ENCODE measurements at regions of chr6 and their contacts with region 1.

Region 1: DNA sequence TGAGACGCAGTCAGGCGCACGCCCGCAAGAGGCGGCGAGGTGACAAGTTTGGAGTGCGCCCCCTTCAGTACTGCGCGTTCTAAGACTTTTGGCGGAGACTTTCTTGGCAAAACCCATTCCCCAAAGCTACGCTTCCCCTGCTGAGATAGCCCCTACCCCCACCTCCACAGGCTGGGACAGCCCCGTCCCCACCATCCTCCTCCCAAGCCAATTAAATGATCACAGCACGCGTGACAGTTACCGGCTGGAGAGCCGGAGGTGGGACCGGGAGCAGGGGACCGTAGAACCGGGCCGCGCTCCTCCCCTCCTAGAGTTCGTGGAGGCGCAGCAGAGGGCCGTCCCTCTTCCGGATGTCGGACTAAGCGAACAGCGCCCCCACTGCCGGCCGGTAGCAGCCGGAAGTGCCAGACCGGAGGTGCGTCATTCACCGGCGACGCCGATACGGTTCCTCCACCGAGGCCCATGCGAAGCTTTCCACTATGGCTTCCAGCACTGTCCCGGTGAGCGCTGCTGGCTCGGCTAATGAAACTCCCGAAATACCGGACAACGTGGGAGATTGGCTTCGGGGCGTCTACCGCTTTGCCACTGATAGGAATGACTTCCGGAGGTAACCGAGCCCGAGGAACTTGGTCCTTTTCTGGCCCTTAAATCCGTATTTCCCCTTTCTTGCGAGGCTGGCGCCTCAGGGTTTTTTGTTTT is at the start of gene TOMM6:
- DNase-seq: peak; percentile 96
- ATAC-seq: peak; percentile 77
- H3K4me3 ChIP-seq: peak within 1 kb of the TSS; percentile 89
- H3K27ac ChIP-seq: peak within 1 kb of the TSS; percentile 69
- H3K4me1 ChIP-seq: peaks cover 17% of the 10 kb centered on the region
- H3K27me3 ChIP-seq: no peaks in the 10 kb centered on the region
- CTCF ChIP-seq: peak; percentile 75
- total RNA-seq, gene TOMM6: 142 and 162 TPM in 2 replicates

Region 2: DNA sequence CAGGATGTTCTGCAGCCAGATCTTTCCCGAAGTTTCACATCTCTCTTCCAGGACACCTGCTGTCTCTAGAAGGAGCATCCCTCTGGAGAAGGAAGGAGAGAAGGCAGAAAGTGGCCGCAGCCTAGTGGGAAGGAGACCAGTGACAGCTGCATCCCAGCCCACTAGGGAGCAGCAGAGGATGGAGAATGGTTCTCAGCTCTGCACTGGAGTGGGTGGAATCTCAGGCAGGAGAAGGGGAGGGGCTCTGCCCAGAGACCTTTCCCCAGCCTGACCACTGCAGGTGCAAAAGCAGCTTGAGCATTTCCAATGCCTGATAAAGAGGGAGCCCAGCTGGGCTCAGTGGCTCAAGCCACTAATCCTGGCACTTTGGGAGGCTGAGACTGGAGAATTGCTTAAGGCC is 419.7 kb before region 1 on chr6:
- CTCF ChIA-PET with region 1: no interaction called
- POLR2A ChIA-PET with region 1: no interaction called
- intact Hi-C with region 1: loop called (anchors 5 kb)
- DNase-seq: peak; percentile 77
- ATAC-seq: peak; percentile 93
- H3K4me3 ChIP-seq: no peak overlapping the region
- H3K27ac ChIP-seq: no peak overlapping the region
- H3K4me1 ChIP-seq: peaks cover 5% of the 10 kb centered on the region; the same call in 1 of the 2 replicates
- H3K27me3 ChIP-seq: peaks cover 53% of the 10 kb centered on the region
- CTCF ChIP-seq: peak; percentile 87

Region 3: DNA sequence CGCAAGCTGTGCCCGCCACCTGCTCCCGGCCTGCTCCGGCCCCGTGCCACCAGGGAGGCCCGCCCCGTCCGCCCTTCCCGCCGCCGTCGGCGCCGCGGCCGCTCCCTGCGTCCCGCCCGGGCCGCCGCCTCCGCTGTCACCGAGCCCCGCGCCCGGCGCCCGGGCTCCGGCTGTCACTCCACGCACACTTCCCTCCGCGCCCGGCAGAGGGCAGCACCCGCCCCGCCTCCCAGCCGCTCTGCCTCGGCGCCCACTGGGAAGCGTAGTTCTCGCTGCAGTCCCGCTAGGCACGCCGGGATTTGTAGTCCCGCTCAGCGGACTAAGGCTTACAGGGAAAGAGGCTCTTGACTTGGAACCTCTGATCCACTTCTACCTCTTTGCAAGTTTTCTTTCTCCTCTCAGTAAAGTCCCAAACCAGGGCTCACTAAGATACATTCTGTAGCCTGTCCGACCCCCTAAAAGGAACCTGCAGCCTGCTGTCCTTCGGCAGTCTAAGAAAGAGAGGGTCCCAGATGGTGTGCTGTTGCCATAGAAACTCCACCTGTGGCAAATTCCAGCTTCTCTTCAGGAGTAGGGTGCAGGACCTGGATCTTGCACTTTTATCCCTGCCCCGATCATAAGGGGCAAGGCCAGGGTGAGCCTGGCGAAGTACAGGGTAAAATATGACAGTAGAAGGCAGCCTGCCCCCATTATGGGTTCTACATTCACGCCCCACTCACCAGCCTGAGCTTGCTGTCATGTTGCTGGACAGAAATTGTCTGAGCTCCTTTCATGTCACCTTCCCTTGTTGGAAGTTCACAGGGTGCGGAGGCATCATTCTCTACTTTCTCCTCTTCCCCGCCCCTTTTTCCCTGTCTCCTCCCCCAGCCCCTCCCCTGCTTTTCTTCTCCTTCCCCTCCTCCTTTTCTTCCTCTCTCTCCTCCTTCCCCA is 51.7 kb before region 1 on chr6 and contains the start of gene TFEB:
- CTCF ChIA-PET with region 1: interaction called, 4 read pairs
- POLR2A ChIA-PET with region 1: no interaction called
- intact Hi-C with region 1: loop called (anchors 2 kb)
- DNase-seq: peak; percentile 92
- ATAC-seq: peak; percentile 69
- H3K4me3 ChIP-seq: peak within 1 kb of the TSS; percentile 71
- H3K27ac ChIP-seq: no peak within 1 kb of the TSS
- H3K4me1 ChIP-seq: peaks cover 12% of the 10 kb centered on the region; the same call in 1 of the 2 replicates
- H3K27me3 ChIP-seq: no peaks in the 10 kb centered on the region
- CTCF ChIP-seq: peak; percentile 71
- total RNA-seq, gene TFEB: 4.2 and 5.5 TPM in 2 replicates

Region 4: DNA sequence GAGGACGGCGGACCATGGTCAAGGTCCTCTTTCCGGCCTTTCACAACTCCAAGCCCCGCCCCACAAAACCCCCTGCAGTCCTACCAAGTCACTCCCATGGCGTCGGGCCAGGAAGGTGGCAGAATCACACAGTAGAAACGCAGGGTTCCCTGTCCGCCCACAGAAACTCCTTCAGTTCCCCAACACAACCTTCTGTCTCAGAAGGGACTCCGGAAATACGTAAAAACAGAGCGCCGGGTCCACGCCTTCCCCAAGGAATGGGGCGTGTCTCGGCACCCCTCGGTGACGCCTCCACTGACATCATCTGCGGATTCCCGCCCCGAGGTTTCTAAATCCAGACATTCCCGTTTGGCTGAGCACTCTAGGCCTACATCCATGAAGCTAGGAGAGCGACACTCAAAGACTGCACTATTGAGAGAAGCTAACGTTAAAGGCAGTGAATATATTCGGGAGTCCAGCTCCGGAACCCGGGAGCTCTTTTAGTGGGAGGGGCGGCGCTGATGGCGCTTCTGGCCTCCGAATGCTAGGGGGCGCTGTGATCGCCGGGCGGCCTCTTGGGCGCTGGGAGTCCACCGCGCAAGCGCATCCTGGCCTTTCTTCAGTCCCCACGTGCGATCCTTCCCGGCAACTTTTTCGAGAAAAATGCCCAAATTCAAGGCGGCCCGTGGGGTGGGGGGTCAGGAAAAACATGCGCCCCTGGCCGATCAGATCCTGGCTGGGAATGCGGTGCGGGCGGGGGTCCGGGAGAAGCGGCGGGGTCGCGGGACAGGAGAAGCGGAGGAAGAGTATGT is 133.7 kb after region 1 on chr6 and contains the starts of genes BYSL and MED20:
- CTCF ChIA-PET with region 1: interaction called, 6 read pairs
- POLR2A ChIA-PET with region 1: interaction called, 10 read pairs
- intact Hi-C with region 1: loop called (anchors 1 kb)
- DNase-seq: peak; percentile 94
- ATAC-seq: peak; percentile 80
- H3K4me3 ChIP-seq: peak within 1 kb of the TSS; percentile 99
- H3K27ac ChIP-seq: peak within 1 kb of the TSS; percentile 89
- H3K4me1 ChIP-seq: peaks cover 37% of the 10 kb centered on the region
- H3K27me3 ChIP-seq: no peaks in the 10 kb centered on the region
- CTCF ChIP-seq: peak; percentile 96
- total RNA-seq, gene BYSL: 46.5 and 84.1 TPM in 2 replicates
- total RNA-seq, gene MED20: 27.5 and 28.5 TPM in 2 replicates

Region 5: GRCh38 chr6:41936073-41936837 is 148.9 kb after region 1 on chr6:
- CTCF ChIA-PET with region 1: interaction called, 7 read pairs
- POLR2A ChIA-PET with region 1: no interaction called
- intact Hi-C with region 1: loop called (anchors 5 kb)
- DNase-seq: peak; percentile 91
- ATAC-seq: peak; percentile 74
- H3K4me3 ChIP-seq: no peak overlapping the region
- H3K27ac ChIP-seq: no peak overlapping the region
- H3K4me1 ChIP-seq: peaks cover 26% of the 10 kb centered on the region
- H3K27me3 ChIP-seq: no peaks in the 10 kb centered on the region
- CTCF ChIP-seq: peak; percentile 87

Region 6: GRCh38 chr6:42224222-42224989 is 437.0 kb after region 1 on chr6:
- CTCF ChIA-PET with region 1: no interaction called
- POLR2A ChIA-PET with region 1: no interaction called
- intact Hi-C with region 1: loop called (anchors 10 kb)
- DNase-seq: peak; percentile 99
- ATAC-seq: peak; percentile 39
- H3K4me3 ChIP-seq: peak overlapping the region; percentile 60
- H3K27ac ChIP-seq: peak overlapping the region; percentile 98
- H3K4me1 ChIP-seq: peaks cover 91% of the 10 kb centered on the region
- H3K27me3 ChIP-seq: no peaks in the 10 kb centered on the region
- CTCF ChIP-seq: no peak